Activated T-helper 1 cell treated with anti-CD3 and anti-CD28 coated beads, Interleukin-12 subunit alpha, Interleukin-12 subunit beta, Interleukin-2, Interleukin-4 antibody, amounts not matched to agents 30 ng/mL and 10 ng/mL and 1 ng/mL, durations not matched to agents 14 hours and 24 hours and 36 hours (primary cell): ENCODE measurements at regions of chr2 and their contacts with region 1.

Region 1: GRCh38 chr2:178414266-178415247 is 36.4 kb downstream of the PRKRA start:
- DNase-seq: peak; percentile 76
- H3K4me3 Mint-ChIP-seq: peak overlapping the region; percentile 87
- H3K27ac Mint-ChIP-seq: peak overlapping the region; percentile 97
- H3K4me1 Mint-ChIP-seq: peaks cover 70% of the 10 kb centered on the region
- H3K27me3 Mint-ChIP-seq: no peaks in the 10 kb centered on the region

Region 2: GRCh38 chr2:178280244-178280852 is 134.2 kb before region 1 on chr2:
- intact Hi-C with region 1: loop called (anchors 1 kb)
- DNase-seq: peak; percentile 12
- H3K4me3 Mint-ChIP-seq: no peak overlapping the region
- H3K27ac Mint-ChIP-seq: no peak overlapping the region
- H3K4me1 Mint-ChIP-seq: no peaks in the 10 kb centered on the region
- H3K27me3 Mint-ChIP-seq: peaks cover 10% of the 10 kb centered on the region

Region 3: DNA sequence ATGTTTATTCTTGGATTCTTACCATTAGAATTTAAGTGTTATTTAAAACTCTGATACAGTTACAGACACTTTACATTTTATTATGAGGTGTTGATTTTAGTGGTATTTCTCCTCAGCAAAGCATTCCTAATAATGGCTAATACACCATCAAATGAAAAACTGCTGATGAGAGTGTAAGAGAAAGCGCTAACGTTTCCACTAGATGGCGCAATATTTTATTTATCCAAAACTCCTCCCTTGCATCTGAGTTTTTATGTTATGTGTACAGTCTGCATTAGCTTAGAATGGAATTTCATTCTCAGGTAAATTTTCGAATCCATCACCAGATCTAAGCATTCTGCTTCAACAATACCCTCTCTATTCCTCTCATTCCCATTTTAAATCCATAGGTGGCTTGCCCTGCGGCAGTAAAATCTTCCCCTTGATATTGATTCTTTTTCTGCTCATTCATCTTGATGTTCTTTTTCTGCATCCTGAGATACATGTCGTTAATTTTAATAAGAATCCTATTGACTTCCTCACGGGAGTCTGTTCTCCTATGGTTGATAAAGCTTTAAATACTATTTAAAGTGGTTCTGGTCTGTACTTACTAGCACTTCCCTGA is 17.5 kb before region 1 on chr2:
- intact Hi-C with region 1: loop called (anchors 1 kb)
- DNase-seq: no peak
- H3K4me3 Mint-ChIP-seq: no peak overlapping the region
- H3K27ac Mint-ChIP-seq: no peak overlapping the region
- H3K4me1 Mint-ChIP-seq: peaks cover 19% of the 10 kb centered on the region
- H3K27me3 Mint-ChIP-seq: peaks cover 6% of the 10 kb centered on the region

Region 4: DNA sequence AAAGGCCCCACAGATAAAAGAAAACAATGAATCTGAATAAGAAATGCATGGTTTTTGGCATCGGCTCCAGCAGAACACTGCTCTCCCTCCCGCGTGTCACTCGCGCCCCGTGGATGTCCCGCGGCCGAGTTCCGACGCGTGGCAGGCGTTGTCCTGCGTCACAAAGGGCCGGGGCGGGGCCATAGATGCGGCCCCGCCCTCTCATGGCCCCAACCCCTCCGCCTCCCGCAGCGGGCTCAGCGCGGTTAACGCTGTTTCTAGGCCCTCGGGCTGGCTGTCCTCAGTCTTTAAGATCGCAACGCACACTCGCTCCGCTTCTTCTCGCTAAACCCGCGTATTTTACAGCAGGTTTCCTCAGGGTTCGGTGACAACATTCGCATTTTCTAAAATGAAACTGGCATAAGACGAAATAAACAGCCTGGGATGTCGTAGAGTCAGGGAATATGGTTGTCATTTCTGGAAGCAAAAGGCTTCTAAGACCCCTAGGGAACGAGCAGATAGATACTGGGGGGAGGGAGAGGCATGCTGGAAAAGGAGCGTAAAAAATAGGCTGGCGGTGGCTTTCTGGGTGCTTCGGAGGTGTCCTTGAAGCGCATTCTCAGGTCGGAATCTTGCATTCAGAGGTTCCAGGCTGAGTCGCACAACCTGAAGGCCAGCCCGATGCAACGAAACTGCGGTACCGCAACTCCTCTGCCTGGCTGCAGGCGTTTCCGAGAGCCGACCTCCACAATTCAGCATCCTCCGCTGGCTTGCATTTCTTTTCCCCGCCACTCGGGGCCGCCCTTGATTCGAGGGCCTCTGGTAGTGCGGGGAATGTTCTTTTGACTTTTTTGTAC is 64.1 kb after region 1 on chr2 and contains the start of gene FKBP7:
- intact Hi-C with region 1: loop called (anchors 1 kb)
- DNase-seq: peak; percentile 75
- H3K4me3 Mint-ChIP-seq: peak within 1 kb of the TSS; percentile 95
- H3K27ac Mint-ChIP-seq: peak within 1 kb of the TSS; percentile 99
- H3K4me1 Mint-ChIP-seq: peaks cover 39% of the 10 kb centered on the region
- H3K27me3 Mint-ChIP-seq: no peaks in the 10 kb centered on the region
- total RNA-seq, gene FKBP7: 2.9 and 4.5 TPM in 2 replicates

Region 5: GRCh38 chr2:178679891-178680290 is 265.3 kb after region 1 on chr2:
- intact Hi-C with region 1: no loop called
- DNase-seq: no peak
- H3K4me3 Mint-ChIP-seq: no peak overlapping the region
- H3K27ac Mint-ChIP-seq: no peak overlapping the region
- H3K4me1 Mint-ChIP-seq: no peaks in the 10 kb centered on the region
- H3K27me3 Mint-ChIP-seq: peaks cover 1% of the 10 kb centered on the region